ENCODE measurements at regions of chr3 and their contacts with region 1.

Region 1: DNA sequence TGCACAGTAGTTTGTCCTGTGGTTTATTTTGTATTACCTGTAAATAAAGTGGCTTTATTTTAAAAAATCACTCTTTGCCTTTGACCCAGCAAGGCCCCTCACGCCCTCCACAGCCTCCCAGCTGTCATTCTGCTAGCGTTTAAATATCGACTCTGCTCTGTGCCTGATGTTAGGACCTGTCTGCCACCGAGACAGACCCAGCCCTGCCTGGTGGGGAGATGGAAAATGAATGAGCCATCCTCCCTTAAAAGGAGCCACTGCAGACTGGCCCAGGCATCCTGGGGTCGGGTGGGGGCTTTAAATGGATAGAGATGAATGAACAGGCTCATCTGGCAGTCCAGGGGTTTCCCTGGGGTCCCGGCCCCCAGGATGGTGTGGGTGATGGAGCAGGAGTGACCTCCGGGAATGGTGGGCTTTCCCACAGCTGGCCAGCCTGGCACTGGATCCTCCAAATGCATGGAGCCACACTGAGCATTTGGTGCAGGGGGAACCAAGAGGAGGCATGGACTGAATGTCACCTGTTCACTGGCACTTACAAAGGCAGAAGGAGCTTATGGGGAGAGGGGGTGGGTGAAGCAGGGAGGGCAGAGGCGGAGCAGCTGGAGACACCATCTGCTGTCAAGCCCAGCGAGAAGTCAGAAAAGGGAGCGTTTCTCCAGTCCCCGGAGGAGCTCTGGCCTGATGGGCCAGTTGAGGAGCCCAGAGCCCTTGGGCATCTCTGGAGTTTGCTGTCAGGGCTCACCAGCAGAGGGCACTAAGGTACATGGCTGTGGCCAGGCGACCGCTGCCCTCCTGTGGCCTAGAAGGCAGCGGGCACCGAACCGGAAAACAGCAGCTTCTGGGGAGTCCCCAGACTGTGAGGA is 11.9 kb downstream of the GRM2 start:
- DNase-seq: peak; percentile 88
- ATAC-seq: peak; percentile 90
- H3K4me3 Mint-ChIP-seq: no peak overlapping the region
- H3K27ac Mint-ChIP-seq: peak overlapping the region; percentile 60
- H3K4me1 Mint-ChIP-seq: peaks cover 36% of the 10 kb centered on the region
- H3K27me3 Mint-ChIP-seq: no peaks in the 10 kb centered on the region

Region 2: GRCh38 chr3:51498876-51499738 is 219.7 kb before region 1 on chr3:
- CTCF ChIA-PET with region 1: interaction called, 17 read pairs
- DNase-seq: peak; percentile 93
- ATAC-seq: peak; percentile 73
- H3K4me3 Mint-ChIP-seq: peak overlapping the region; percentile 99
- H3K27ac Mint-ChIP-seq: peak overlapping the region; percentile 92
- H3K4me1 Mint-ChIP-seq: peaks cover 25% of the 10 kb centered on the region
- H3K27me3 Mint-ChIP-seq: no peaks in the 10 kb centered on the region

Region 3: DNA sequence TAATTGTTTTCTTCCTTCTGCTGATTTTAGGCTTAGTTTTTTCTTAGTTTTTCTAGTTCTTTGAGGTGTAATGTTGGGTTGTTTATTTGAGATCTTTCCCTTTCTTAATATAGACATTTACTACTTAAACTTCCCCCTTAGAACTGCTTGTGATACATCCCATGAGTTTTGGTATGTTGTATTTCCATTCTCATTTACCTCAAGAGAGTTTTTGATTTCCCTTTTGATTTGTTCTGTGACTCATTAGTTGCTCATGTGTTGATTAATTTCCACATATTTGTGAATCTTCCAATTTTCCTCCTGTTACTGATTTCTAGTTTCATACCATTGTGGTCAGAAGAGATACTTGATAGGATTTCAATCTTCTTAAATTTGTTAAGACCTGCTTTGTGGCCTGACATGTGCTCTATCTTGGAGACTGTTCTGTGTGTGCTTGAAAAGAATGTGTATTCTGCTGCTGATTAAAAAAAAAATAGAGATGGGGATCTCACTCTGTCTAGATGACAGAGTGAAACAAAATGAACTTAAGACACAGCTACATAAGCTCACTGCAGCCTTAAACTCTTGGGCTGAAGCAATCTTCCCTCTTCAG is 10.4 kb after region 1 on chr3:
- CTCF ChIA-PET with region 1: interaction called, 29 read pairs
- DNase-seq: no peak
- ATAC-seq: peak; percentile 27
- H3K4me3 Mint-ChIP-seq: no peak overlapping the region
- H3K27ac Mint-ChIP-seq: peak overlapping the region; percentile 16
- H3K4me1 Mint-ChIP-seq: peaks cover 37% of the 10 kb centered on the region
- H3K27me3 Mint-ChIP-seq: no peaks in the 10 kb centered on the region

Region 4: GRCh38 chr3:51734572-51734907 is 15.8 kb after region 1 on chr3:
- CTCF ChIA-PET with region 1: interaction called, 29 read pairs
- DNase-seq: peak; percentile 79
- ATAC-seq: peak; percentile 94
- H3K4me3 Mint-ChIP-seq: peak overlapping the region; percentile 55
- H3K27ac Mint-ChIP-seq: peak overlapping the region; percentile 62
- H3K4me1 Mint-ChIP-seq: peaks cover 37% of the 10 kb centered on the region
- H3K27me3 Mint-ChIP-seq: peaks cover 29% of the 10 kb centered on the region

Region 5: DNA sequence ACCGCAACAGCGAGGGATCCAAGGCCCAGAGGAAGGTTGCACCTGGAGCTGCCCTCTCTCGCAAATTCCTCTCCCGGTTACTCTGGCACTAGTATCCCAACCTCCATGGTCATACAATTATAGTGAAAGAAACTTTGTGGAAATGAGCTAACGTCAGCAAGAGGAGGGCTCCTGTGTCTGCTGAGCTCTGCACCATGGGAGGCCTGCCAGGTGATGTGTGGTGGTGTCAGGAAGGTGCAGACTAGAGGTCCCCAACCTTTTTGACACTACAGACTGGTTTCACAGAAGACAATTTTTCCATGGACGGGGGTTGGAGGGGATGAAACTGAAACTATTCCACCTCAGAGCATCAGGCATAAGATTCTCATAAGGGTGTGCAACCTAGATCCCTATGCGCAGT is 73.4 kb after region 1 on chr3:
- CTCF ChIA-PET with region 1: interaction called, 128 read pairs
- DNase-seq: no peak
- ATAC-seq: no peak
- H3K4me3 Mint-ChIP-seq: no peak overlapping the region
- H3K27ac Mint-ChIP-seq: no peak overlapping the region
- H3K4me1 Mint-ChIP-seq: peaks cover 34% of the 10 kb centered on the region
- H3K27me3 Mint-ChIP-seq: peaks cover 25% of the 10 kb centered on the region

Region 6: GRCh38 chr3:51799879-51800749 is 81.3 kb after region 1 on chr3:
- CTCF ChIA-PET with region 1: interaction called, 128 read pairs
- DNase-seq: peak; percentile 38
- ATAC-seq: peak; percentile 54
- H3K4me3 Mint-ChIP-seq: no peak overlapping the region
- H3K27ac Mint-ChIP-seq: no peak overlapping the region
- H3K4me1 Mint-ChIP-seq: peaks cover 52% of the 10 kb centered on the region
- H3K27me3 Mint-ChIP-seq: peaks cover 14% of the 10 kb centered on the region

Measured in activated CD8-positive, alpha-beta memory T cell treated with anti-CD3 and anti-CD28 coated beads, Interleukin-2, amount 10 ng/mL, durations not matched to agents 7 days and 5 days (primary cell).